Common myeloid progenitor, CD34-positive (primary cell): ENCODE measurements at regions of chr3 and their contacts with region 1.

Region 1: DNA sequence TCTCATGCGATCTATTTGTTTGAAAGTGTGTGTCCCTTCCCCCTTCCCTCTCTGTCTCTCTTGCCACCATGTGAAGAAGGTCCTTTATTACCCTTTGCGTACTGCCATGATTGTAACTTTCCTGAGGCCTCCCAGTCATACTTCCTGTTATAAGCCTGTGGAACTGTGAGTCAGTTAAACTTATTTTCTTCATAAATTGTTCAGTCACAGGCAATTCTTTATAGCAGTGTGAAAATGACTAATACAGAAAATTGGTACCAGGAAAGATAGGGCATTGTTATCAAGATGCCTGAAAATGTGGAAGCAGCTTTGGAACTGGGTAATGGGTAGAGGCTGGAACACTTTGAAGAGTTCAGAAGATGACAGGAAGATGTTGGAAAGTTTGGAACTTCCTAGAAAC is 743.7 kb upstream of the NECTIN3 start:
- DNase-seq: no peak
- H3K4me3 ChIP-seq: no peak overlapping the region
- H3K27ac ChIP-seq: no peak overlapping the region
- H3K4me1 ChIP-seq: no peaks in the 10 kb centered on the region
- H3K27me3 ChIP-seq: no peaks in the 10 kb centered on the region

Region 2: DNA sequence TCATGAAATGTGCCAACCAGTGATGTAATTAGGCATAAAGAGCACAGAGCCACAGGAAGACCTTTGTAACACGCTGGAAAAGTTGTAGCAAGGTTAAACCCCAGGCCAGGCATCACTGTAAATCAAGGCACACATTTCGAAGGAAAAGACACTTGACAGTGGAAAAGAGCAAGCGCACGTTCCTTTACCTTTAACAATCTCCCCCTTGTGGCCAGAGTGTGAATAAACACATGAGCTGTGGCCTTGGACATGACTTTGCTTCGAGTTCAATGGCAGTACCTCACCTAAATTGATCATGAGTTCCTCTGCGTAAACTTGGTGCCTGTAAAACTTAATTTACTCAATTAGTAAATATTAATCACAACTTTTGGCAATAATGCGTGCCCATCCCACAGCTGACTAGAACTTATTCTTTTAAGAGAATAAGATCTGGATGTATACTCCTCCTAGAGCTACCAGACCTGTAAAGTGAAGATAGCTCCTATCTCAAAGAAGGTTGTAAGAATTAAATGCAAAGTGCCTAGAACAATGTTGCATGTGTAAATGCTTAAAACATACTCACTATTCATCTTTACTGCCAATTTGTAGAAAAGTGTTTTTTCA is 13.3 kb before region 1 on chr3:
- CTCF ChIA-PET with region 1: interaction called, 10 read pairs
- POLR2A ChIA-PET with region 1: no interaction called
- DNase-seq: peak; percentile 47 to 73 (median 67)
- H3K4me3 ChIP-seq: no peak overlapping the region
- H3K27ac ChIP-seq: no peak overlapping the region
- H3K4me1 ChIP-seq: peaks cover 0 to 5% (median 0%) of the 10 kb centered on the region in 4 experiments
- H3K27me3 ChIP-seq: no peaks in the 10 kb centered on the region